Naive thymus-derived CD4-positive, alpha-beta T cell (primary cell): ENCODE measurements at regions of chr19 and their contacts with region 1.

Region 1: DNA sequence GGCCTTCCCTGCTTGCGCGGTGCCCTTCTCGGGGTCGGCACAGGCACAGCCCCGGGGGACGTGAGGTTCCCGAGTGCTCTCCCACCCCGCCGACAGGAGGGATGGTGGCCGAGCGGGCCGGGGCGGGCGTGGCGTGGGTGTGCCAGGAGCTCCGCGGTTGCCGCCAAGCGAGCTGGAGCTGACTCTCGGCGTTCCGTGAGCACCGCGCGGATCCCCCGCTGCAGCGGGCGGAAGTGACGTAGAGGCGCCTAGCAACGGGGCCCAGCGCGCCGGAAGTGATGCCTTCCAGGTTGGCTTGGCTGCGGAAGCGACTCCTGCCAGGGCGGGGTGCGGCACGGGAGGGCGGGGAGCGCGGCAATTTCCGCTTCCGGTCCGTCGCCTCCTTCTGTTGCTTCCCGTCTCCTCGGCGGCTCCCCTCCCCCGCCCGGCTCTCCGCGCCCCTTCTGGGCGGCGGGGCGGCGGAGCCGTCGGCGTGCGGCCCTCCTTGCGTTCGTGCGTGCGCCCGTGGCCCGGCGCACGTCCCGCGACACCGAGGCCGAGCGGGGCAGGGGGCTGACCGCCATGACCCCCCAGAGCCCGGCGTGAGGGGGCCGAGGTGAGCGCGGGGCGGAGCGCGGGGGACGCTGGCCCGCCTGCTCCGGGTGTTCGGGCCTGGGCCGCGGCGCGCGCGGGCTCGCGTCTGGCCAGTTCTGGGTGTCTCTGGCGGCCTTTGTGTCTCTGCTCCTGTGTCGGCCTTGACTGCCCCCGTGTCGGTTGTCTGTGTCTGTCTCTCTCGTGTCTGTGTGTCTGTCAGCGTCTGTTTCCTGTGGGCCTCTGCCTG is at the start of gene EPN1:
- DNase-seq: peak; percentile 88 to 98 (median 96)
- ATAC-seq: peak; percentile 93
- H3K4me3 ChIP-seq: peak within 1 kb of the TSS; percentile 72
- H3K4me3 Mint-ChIP-seq: peak within 1 kb of the TSS; percentile 89 to 99 (median 97)
- H3K27ac ChIP-seq: peak within 1 kb of the TSS; percentile 84
- H3K27ac Mint-ChIP-seq: peak within 1 kb of the TSS; percentile 90 to 99 (median 96)
- H3K4me1 ChIP-seq: peaks cover 26 to 28% of the 10 kb centered on the region in 2 donors
- H3K4me1 Mint-ChIP-seq: peaks cover 49 to 72% (median 58%) of the 10 kb centered on the region in 7 donors
- H3K27me3 ChIP-seq: no peaks in the 10 kb centered on the region
- H3K27me3 Mint-ChIP-seq: no peaks in the 10 kb centered on the region
- total RNA-seq, gene EPN1: 45.2 to 67.1 (median 52.2) TPM

Region 2: GRCh38 chr19:55580628-55581144 is 94.4 kb before region 1 on chr19 and contains the start of gene ZNF579:
- CTCF ChIA-PET with region 1: no interaction called
- POLR2A ChIA-PET with region 1: no interaction called
- intact Hi-C with region 1: loop called in 1 of 2 experiments (anchors 1 kb)
- DNase-seq: peak in 8 of 9 donors; percentile 50 to 82 (median 64)
- ATAC-seq: peak; percentile 86
- H3K4me3 ChIP-seq: peak within 1 kb of the TSS; percentile 82
- H3K4me3 Mint-ChIP-seq: peak within 1 kb of the TSS; percentile 85 to 92 (median 88)
- H3K27ac ChIP-seq: peak within 1 kb of the TSS; percentile 87
- H3K27ac Mint-ChIP-seq: peak within 1 kb of the TSS; percentile 76 to 96 (median 88)
- H3K4me1 ChIP-seq: peaks cover 8 to 16% of the 10 kb centered on the region in 2 donors
- H3K4me1 Mint-ChIP-seq: peaks cover 21 to 35% (median 29%) of the 10 kb centered on the region in 7 donors
- H3K27me3 ChIP-seq: no peaks in the 10 kb centered on the region
- H3K27me3 Mint-ChIP-seq: peaks cover 0 to 16% (median 0%) of the 10 kb centered on the region in 5 donors
- total RNA-seq, gene ZNF579: 6.1 to 11.0 (median 7.8) TPM

Region 3: GRCh38 chr19:55643348-55644176 is 31.5 kb before region 1 on chr19 and contains the start of gene ZNF581:
- CTCF ChIA-PET with region 1: interaction called, 3 read pairs
- POLR2A ChIA-PET with region 1: interaction called, 3 read pairs
- intact Hi-C with region 1: loop called in 1 of 2 experiments (anchors 1 kb)
- DNase-seq: peak; percentile 63 to 85 (median 81)
- ATAC-seq: peak; percentile 73
- H3K4me3 ChIP-seq: peak within 1 kb of the TSS; percentile 80
- H3K4me3 Mint-ChIP-seq: peak within 1 kb of the TSS; percentile 87 to 97 (median 94)
- H3K27ac ChIP-seq: peak within 1 kb of the TSS; percentile 80
- H3K27ac Mint-ChIP-seq: peak within 1 kb of the TSS; percentile 91 to 98 (median 96)
- H3K4me1 ChIP-seq: peaks cover 24 to 25% of the 10 kb centered on the region in 2 donors
- H3K4me1 Mint-ChIP-seq: peaks cover 23 to 63% (median 54%) of the 10 kb centered on the region in 7 donors
- H3K27me3 ChIP-seq: no peaks in the 10 kb centered on the region
- H3K27me3 Mint-ChIP-seq: no peaks in the 10 kb centered on the region
- total RNA-seq, gene ZNF581: 27.0 to 35.8 (median 32.1) TPM

Region 4: DNA sequence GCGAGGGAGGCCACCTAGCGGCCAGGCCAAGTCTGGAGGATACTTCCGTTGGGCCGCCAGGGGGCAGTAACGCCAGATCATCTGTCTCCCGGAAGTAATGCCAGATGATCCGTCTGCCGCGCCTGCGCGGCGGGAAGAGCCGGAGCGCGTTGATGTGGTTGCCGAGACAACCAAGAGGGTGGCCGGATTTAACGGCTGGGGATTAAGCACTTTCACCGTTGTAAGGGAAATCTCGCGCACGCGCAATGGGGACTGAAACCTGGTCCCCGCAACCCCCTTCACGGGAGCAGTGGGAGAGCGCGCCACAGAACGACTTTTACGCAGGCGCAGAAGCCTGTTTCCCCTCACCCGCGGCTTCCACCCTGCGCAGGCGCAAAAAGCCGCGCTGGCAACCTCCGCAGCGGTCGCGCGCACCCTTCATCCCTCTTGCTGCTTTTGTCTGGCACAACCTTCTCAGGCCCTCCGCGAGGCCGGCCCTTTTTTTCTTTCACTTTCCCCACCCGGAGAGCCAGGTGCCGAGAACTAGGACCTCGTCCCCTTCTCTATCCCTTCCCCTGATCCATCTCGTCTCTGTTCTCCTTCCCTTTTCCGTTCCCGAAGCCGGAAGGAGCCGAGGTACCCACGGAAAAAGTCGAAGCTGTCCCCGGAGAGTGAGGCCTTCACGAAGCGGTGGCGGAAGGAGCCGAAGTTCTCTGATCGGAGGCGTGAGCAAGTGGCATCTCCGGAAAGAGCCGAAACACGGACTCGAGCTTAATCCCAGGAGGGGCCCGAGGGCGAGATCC is 21.1 kb before region 1 on chr19:
- CTCF ChIA-PET with region 1: interaction called, 7 read pairs
- POLR2A ChIA-PET with region 1: interaction called, 6 read pairs
- intact Hi-C with region 1: loop called (anchors 1 kb)
- DNase-seq: peak; percentile 95 to 100 (median 100)
- ATAC-seq: peak; percentile 83
- H3K4me3 ChIP-seq: peak overlapping the region; percentile 98
- H3K4me3 Mint-ChIP-seq: peak overlapping the region; percentile 83 to 99 (median 96)
- H3K27ac ChIP-seq: peak overlapping the region; percentile 99
- H3K27ac Mint-ChIP-seq: peak overlapping the region; percentile 95 to 100 (median 99)
- H3K4me1 ChIP-seq: peaks cover 30 to 36% of the 10 kb centered on the region in 2 donors
- H3K4me1 Mint-ChIP-seq: peaks cover 29 to 55% (median 39%) of the 10 kb centered on the region in 7 donors
- H3K27me3 ChIP-seq: no peaks in the 10 kb centered on the region
- H3K27me3 Mint-ChIP-seq: peaks cover 0 to 2% (median 0%) of the 10 kb centered on the region in 5 donors

Region 5: DNA sequence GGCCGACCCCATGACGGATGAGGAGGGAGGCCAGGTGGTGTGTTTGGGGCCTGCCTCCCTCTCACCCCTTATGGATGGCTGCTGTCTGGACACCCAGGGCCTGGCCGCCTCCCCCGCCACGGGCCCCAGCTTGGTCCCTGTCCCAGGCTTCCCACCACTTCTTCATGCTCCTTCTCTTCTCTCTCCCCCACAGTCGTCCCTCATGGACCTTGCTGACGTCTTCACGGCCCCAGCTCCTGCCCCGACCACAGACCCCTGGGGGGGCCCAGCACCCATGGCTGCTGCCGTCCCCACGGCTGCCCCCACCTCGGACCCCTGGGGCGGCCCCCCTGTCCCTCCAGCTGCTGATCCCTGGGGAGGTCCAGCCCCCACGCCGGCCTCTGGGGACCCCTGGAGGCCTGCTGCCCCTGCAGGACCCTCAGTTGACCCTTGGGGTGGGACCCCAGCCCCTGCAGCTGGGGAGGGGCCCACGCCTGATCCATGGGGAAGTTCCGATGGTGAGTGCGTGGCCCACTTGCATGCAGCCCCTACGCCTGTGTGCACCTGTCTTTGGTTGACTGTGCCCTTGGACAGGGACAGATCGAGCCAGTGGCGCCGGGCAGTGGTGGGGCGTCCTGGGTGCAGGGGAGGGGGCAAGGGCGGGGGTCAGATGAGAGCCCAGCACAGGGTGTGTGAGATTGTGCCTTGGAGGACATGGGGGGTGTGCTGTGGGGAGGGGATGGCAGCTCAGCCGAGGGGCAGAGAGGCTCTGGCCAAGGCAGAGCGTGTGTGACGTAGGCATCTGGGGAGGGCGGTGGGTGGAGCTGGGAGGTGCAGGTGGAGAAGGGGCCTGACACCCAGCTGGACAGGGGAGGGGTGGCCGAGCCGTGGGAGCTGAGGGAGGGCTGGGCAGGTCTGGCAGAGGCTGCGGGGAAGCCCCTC is 16.8 kb after region 1 on chr19:
- CTCF ChIA-PET with region 1: no interaction called
- POLR2A ChIA-PET with region 1: no interaction called
- intact Hi-C with region 1: no loop called
- DNase-seq: no peak
- ATAC-seq: no peak
- H3K4me3 ChIP-seq: no peak overlapping the region
- H3K4me3 Mint-ChIP-seq: no peak overlapping the region
- H3K27ac ChIP-seq: no peak overlapping the region
- H3K27ac Mint-ChIP-seq: no peak overlapping the region
- H3K4me1 ChIP-seq: no peaks in the 10 kb centered on the region
- H3K4me1 Mint-ChIP-seq: peaks cover 0 to 14% (median 0%) of the 10 kb centered on the region in 7 donors
- H3K27me3 ChIP-seq: no peaks in the 10 kb centered on the region
- H3K27me3 Mint-ChIP-seq: no peaks in the 10 kb centered on the region

Region 6: DNA sequence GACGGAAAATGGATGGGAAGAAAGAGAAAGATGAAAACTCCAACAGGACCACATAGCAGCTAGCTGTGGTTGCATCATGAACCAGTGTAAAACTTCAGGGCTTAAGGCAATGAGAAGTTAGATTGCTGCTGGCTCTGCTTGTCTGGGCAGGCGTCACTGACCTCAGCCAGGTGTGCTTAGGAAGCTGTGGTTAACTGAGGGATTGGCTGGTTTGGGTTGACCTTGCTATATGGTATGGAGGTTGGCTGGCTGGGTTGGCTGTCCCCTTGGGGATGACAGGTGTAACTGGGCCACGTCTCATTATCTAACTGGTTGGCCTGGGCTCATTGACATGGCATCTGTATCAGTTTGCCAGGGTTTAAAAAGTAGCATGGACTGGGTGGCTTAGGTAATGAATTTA is 202.2 kb after region 1 on chr19:
- CTCF ChIA-PET with region 1: no interaction called
- POLR2A ChIA-PET with region 1: no interaction called
- intact Hi-C with region 1: no loop called
- DNase-seq: no peak
- ATAC-seq: no peak
- H3K4me3 ChIP-seq: no peak overlapping the region
- H3K4me3 Mint-ChIP-seq: no peak overlapping the region
- H3K27ac ChIP-seq: no peak overlapping the region
- H3K27ac Mint-ChIP-seq: no peak overlapping the region
- H3K4me1 ChIP-seq: no peaks in the 10 kb centered on the region
- H3K4me1 Mint-ChIP-seq: no peaks in the 10 kb centered on the region
- H3K27me3 ChIP-seq: no peaks in the 10 kb centered on the region
- H3K27me3 Mint-ChIP-seq: peaks cover 0 to 8% (median 0%) of the 10 kb centered on the region in 5 donors